ENCODE measurements at regions of chr2 and their contacts with region 1.

Region 1: DNA sequence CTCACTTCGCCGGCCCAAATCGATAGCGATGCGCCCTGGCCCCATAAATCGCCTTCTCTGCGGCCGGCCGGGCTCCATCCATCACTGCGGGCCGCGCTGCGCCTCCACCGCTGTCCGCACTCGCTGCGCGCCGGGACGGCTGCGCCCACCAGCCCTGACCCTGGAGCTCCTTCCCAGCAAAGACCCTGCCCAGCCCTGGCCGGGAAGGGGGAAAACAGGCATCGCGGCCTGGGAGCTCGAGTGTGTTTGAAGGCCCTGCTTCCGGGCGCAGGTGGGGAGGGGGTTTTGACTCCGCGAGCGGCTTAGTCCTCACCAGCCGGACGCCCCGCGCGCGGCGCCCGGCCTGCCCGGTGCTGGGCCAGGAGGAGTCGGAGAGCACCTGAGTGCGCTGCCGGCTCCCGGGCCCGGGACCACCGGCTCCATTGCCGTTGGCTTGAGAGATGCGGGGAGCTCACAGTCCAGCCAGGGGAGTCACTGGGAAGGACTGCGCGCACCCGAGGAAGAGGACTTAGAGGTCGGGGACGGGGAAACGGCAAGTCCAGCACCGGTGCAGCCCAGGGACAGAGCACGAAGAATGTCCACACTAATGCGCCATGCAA is 1.1 kb downstream of the PAX8 start:
- DNase-seq: no peak
- ATAC-seq: no peak
- H3K4me3 ChIP-seq: no peak overlapping the region
- H3K27ac ChIP-seq: peak overlapping the region in 1 of 2 experiments; percentile 98; a peak in 2 of 6 replicates
- H3K4me1 ChIP-seq: peaks cover 50% of the 10 kb centered on the region
- CTCF ChIP-seq: no peak
- EP300 ChIP-seq: no peak
- POLR2A ChIP-seq: no peak
- RAD21 ChIP-seq: no peak

Region 2: GRCh38 chr2:113248997-113249770 is 28.4 kb before region 1 on chr2:
- CTCF ChIA-PET with region 1: interaction called, 14 read pairs
- POLR2A ChIA-PET with region 1: no interaction called
- DNase-seq: peak; percentile 67 to 83
- ATAC-seq: peak; percentile 67 to 92; a peak in 4 of 6 replicates
- H3K4me3 ChIP-seq: no peak overlapping the region
- H3K27ac ChIP-seq: peak overlapping the region; percentile 97 to 98
- H3K4me1 ChIP-seq: peaks cover 24% of the 10 kb centered on the region
- CTCF ChIP-seq: peak; percentile 82
- EP300 ChIP-seq: no peak
- POLR2A ChIP-seq: no peak
- RAD21 ChIP-seq: peak; percentile 95 to 97